ENCODE measurements at regions of chr1 and their contacts with region 1.

Region 1: GRCh38 chr1:22025368-22026155 is 24.1 kb downstream of the CELA3A start:
- DNase-seq: peak; percentile 96
- ATAC-seq: peak; percentile 69
- H3K4me3 Mint-ChIP-seq: peak overlapping the region; percentile 86
- H3K27ac Mint-ChIP-seq: peak overlapping the region; percentile 99
- H3K4me1 Mint-ChIP-seq: peaks cover 47% of the 10 kb centered on the region
- H3K27me3 Mint-ChIP-seq: no peaks in the 10 kb centered on the region
- CTCF ChIP-seq: no peak

Region 2: DNA sequence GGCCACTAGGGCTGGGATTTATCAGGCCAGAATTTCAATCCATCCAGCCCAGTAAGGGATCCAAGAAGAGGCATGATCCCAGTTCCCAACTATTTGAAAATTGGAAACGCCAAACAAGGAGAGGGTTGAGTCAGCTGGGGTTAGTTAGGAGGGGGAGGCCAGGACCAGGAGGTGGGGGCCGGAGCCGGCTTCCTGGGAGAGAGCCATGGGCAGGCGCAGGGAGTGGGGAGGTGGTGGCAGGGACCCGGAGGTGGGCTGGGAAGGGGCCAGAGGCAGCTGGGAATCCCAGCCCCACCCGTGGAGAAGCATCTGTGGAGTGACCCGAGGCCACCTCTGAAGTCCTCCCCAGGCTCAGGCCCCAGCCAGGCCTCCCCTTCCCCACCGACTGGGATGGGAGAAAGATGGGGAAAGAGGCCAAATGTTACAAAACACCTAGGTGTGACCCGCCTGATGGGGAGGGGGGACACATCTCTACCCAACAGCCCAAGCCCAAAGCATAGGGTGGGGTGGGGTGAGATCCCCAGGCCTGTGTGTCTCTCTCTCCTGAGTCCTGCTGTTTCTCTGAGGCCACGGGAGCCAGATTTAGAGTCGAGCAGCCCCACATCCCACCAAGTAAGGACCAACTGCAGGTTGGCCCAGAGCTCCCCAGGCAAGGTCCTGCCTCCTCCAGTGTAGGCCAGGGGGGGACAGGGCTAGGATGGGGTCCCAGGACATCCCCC is 98.6 kb before region 1 on chr1:
- CTCF ChIA-PET with region 1: no interaction called
- POLR2A ChIA-PET with region 1: no interaction called
- intact Hi-C with region 1: no loop called
- DNase-seq: no peak
- ATAC-seq: no peak
- H3K4me3 Mint-ChIP-seq: no peak overlapping the region
- H3K27ac Mint-ChIP-seq: no peak overlapping the region
- H3K4me1 Mint-ChIP-seq: peaks cover 5% of the 10 kb centered on the region
- H3K27me3 Mint-ChIP-seq: no peaks in the 10 kb centered on the region
- CTCF ChIP-seq: no peak

Region 3: DNA sequence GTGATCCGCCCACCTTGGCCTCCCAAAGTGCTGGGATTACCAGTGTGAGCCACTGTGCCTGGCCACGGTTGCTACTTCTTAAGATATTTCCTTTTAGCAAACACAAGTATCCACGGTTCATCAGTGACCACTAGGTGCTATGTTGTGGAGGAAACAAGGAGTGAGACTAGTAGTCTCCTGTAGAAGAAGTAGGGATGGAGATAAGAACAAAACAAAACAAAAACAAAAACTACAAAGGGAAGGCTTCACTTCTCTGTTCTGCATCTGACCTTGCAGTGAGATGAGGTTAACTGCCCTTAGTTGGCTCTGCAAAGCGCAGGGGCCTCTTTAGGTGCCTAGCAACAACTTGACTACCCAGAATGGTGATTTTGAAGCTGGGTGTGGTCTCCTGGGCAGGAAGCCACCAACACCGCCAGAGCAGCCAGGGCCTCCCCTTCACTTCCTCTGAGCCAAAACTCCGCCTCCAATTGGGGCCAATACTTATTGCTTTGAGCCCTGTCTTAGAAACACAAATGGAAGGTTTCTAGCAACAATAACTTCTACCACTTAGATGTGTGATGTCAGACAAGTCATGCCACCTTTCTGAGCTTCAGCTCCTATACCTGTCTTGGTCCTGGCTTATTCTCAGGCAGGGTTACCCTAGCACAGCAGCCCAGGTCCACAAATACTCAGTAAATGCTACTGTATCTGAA is 14.2 kb after region 1 on chr1:
- CTCF ChIA-PET with region 1: interaction called, 32 read pairs
- POLR2A ChIA-PET with region 1: interaction called, 218 read pairs
- intact Hi-C with region 1: no loop called
- DNase-seq: peak; percentile 96
- ATAC-seq: peak; percentile 97
- H3K4me3 Mint-ChIP-seq: peak overlapping the region; percentile 72
- H3K27ac Mint-ChIP-seq: peak overlapping the region; percentile 95
- H3K4me1 Mint-ChIP-seq: peaks cover 47% of the 10 kb centered on the region
- H3K27me3 Mint-ChIP-seq: no peaks in the 10 kb centered on the region
- CTCF ChIP-seq: no peak

Region 4: DNA sequence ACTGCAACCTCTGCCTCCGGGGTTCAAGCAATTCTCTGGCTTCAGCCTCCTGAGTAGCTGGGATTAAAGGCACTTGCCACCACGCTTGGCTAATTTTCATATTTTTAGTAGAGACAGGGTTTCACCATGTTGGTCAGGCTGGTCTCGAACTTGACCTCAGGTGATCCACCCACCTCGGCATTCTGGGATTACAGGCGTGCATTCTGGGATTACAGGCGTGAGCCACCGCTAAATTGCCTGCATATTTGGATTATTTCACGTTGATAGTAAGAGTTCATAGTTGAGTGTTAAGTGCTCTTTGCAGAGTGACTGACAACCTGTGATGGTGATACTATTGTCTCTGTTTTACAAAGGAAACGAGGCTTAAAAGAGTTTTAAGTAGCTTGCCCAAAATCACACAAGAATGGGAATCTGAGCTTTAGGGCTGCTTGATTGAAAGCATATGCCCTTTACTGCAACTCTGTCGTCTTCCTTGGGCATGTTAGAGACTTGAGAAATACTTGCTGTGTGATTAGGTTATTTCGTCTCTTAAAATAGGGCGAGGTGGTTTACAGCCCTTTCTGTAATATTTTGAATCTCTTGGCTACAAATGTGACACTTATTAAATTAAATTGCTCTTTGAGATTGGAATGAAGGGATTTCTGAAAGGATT is 39.3 kb after region 1 on chr1:
- CTCF ChIA-PET with region 1: interaction called, 12 read pairs
- POLR2A ChIA-PET with region 1: interaction called, 218 read pairs
- intact Hi-C with region 1: no loop called
- DNase-seq: no peak
- ATAC-seq: no peak
- H3K4me3 Mint-ChIP-seq: no peak overlapping the region
- H3K27ac Mint-ChIP-seq: peak overlapping the region; percentile 72
- H3K4me1 Mint-ChIP-seq: peaks cover 81% of the 10 kb centered on the region
- H3K27me3 Mint-ChIP-seq: no peaks in the 10 kb centered on the region
- CTCF ChIP-seq: no peak

Region 5: GRCh38 chr1:22089787-22090186 is 64.2 kb after region 1 on chr1:
- CTCF ChIA-PET with region 1: interaction called, 9 read pairs
- POLR2A ChIA-PET with region 1: interaction called, 14 read pairs
- intact Hi-C with region 1: loop called (anchors 2 kb)
- DNase-seq: no peak
- ATAC-seq: no peak
- H3K4me3 Mint-ChIP-seq: peak overlapping the region; percentile 58
- H3K27ac Mint-ChIP-seq: peak overlapping the region; percentile 81
- H3K4me1 Mint-ChIP-seq: peaks cover 83% of the 10 kb centered on the region
- H3K27me3 Mint-ChIP-seq: no peaks in the 10 kb centered on the region
- CTCF ChIP-seq: no peak

Region 6: DNA sequence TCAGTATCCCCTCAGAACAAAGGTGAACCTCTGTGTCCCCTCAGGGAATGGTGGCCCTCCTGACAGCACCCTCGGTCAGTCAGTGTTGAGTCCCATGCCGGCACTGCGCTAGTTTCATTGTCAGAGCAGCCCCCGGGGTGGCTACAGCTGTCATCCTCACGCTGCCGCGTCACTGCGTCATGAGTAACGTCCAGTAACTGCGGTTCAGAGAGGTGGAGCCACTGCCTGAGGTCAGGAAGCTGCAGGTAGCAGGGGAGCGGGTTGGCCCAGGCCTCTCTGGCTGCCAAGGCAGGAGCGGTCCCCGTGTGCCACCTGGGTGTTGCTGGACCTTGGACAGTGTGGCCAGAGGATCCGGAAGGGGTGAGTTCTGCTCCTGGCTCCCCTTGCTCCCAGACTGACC is 137.6 kb after region 1 on chr1:
- CTCF ChIA-PET with region 1: no interaction called
- POLR2A ChIA-PET with region 1: no interaction called
- intact Hi-C with region 1: no loop called
- DNase-seq: no peak
- ATAC-seq: no peak
- H3K4me3 Mint-ChIP-seq: no peak overlapping the region
- H3K27ac Mint-ChIP-seq: no peak overlapping the region
- H3K4me1 Mint-ChIP-seq: no peaks in the 10 kb centered on the region
- H3K27me3 Mint-ChIP-seq: peaks cover 3% of the 10 kb centered on the region
- CTCF ChIP-seq: no peak

Region 7: GRCh38 chr1:22296701-22297591 is 271.4 kb after region 1 on chr1:
- CTCF ChIA-PET with region 1: no interaction called
- POLR2A ChIA-PET with region 1: no interaction called
- intact Hi-C with region 1: no loop called
- DNase-seq: peak; percentile 21
- ATAC-seq: no peak
- H3K4me3 Mint-ChIP-seq: no peak overlapping the region
- H3K27ac Mint-ChIP-seq: no peak overlapping the region
- H3K4me1 Mint-ChIP-seq: peaks cover 2% of the 10 kb centered on the region
- H3K27me3 Mint-ChIP-seq: peaks cover 47% of the 10 kb centered on the region
- CTCF ChIP-seq: no peak

Measured in activated CD8-positive, alpha-beta T cell treated with anti-CD3 and anti-CD28 coated beads for 36 hours (primary cell).